Naive thymus-derived CD4-positive, alpha-beta T cell (primary cell): ENCODE measurements at regions of chr17 and their contacts with region 1.

Region 1: DNA sequence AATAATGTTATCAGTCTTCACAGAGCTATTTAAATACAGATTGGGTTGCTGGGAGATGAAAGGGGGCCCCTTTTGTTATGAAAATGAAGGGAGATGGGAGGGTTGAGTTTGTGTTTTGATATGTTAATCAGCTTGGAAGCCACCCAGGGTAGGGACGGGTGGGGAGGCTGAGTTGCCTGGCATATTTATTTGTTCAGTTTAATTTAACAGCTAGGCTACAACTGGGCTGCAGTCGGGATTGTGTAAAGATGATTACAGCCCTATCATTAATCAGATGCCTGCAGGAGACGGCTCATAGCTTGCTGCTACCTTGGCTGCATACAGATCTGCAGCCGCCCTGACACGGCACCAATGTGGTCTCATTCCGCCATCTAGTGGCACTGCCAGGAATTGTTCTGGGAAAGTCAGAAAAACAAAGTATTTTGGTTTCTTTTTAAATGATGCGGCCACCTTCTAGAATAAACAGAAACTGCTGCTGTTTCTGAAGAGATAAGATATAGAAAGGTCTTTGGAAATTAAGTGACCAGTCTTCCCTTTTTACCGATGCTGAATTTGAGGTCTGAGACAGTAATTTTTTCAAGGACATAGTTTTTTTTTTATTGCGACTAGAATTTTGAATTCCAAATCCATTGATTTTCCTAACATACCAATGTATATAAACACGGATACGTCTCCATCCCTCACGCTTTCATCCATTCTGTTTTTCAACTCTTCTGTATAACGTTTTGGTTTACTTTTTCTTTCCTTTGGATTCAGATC is 458.0 kb upstream of the ASIC2 start:
- DNase-seq: peak; percentile 21 to 65 (median 50)
- ATAC-seq: peak; percentile 75
- H3K4me3 ChIP-seq: no peak overlapping the region
- H3K4me3 Mint-ChIP-seq: peak overlapping the region in 8 of 10 donors; percentile 13 to 72 (median 48)
- H3K27ac ChIP-seq: no peak overlapping the region
- H3K27ac Mint-ChIP-seq: no peak overlapping the region
- H3K4me1 ChIP-seq: no peaks in the 10 kb centered on the region
- H3K4me1 Mint-ChIP-seq: peaks cover 0 to 9% (median 6%) of the 10 kb centered on the region in 7 donors
- H3K27me3 ChIP-seq: peaks cover 0 to 3% of the 10 kb centered on the region in 2 donors
- H3K27me3 Mint-ChIP-seq: peaks cover 16 to 71% (median 42%) of the 10 kb centered on the region in 5 donors

Region 2: GRCh38 chr17:33459078-33459940 is 291.8 kb before region 1 on chr17:
- CTCF ChIA-PET with region 1: no interaction called
- POLR2A ChIA-PET with region 1: no interaction called
- intact Hi-C with region 1: no loop called
- DNase-seq: no peak
- ATAC-seq: no peak
- H3K4me3 ChIP-seq: no peak overlapping the region
- H3K4me3 Mint-ChIP-seq: no peak overlapping the region
- H3K27ac ChIP-seq: no peak overlapping the region
- H3K27ac Mint-ChIP-seq: no peak overlapping the region
- H3K4me1 ChIP-seq: no peaks in the 10 kb centered on the region
- H3K4me1 Mint-ChIP-seq: no peaks in the 10 kb centered on the region
- H3K27me3 ChIP-seq: no peaks in the 10 kb centered on the region
- H3K27me3 Mint-ChIP-seq: peaks cover 3 to 51% (median 22%) of the 10 kb centered on the region in 5 donors

Region 3: GRCh38 chr17:33511670-33512069 is 239.5 kb before region 1 on chr17:
- CTCF ChIA-PET with region 1: no interaction called
- POLR2A ChIA-PET with region 1: no interaction called
- intact Hi-C with region 1: loop called in 1 of 2 experiments (anchors 10 kb)
- DNase-seq: no peak
- ATAC-seq: no peak
- H3K4me3 ChIP-seq: no peak overlapping the region
- H3K4me3 Mint-ChIP-seq: peak overlapping the region in 1 of 10 donors; percentile 24
- H3K27ac ChIP-seq: no peak overlapping the region
- H3K27ac Mint-ChIP-seq: no peak overlapping the region
- H3K4me1 ChIP-seq: peaks cover 0 to 8% of the 10 kb centered on the region in 2 donors
- H3K4me1 Mint-ChIP-seq: peaks cover 5 to 16% (median 6%) of the 10 kb centered on the region in 7 donors
- H3K27me3 ChIP-seq: no peaks in the 10 kb centered on the region
- H3K27me3 Mint-ChIP-seq: peaks cover 8 to 32% (median 10%) of the 10 kb centered on the region in 5 donors

Region 4: GRCh38 chr17:33520426-33521330 is 230.4 kb before region 1 on chr17:
- CTCF ChIA-PET with region 1: no interaction called
- POLR2A ChIA-PET with region 1: no interaction called
- intact Hi-C with region 1: loop called (anchors 10 kb)
- DNase-seq: peak in 4 of 9 donors; percentile 14 to 38 (median 20)
- ATAC-seq: peak; percentile 22
- H3K4me3 ChIP-seq: no peak overlapping the region
- H3K4me3 Mint-ChIP-seq: no peak overlapping the region
- H3K27ac ChIP-seq: no peak overlapping the region
- H3K27ac Mint-ChIP-seq: no peak overlapping the region
- H3K4me1 ChIP-seq: no peaks in the 10 kb centered on the region
- H3K4me1 Mint-ChIP-seq: peaks cover 0 to 2% (median 0%) of the 10 kb centered on the region in 7 donors
- H3K27me3 ChIP-seq: no peaks in the 10 kb centered on the region
- H3K27me3 Mint-ChIP-seq: peaks cover 0 to 12% (median 4%) of the 10 kb centered on the region in 5 donors

Region 5: DNA sequence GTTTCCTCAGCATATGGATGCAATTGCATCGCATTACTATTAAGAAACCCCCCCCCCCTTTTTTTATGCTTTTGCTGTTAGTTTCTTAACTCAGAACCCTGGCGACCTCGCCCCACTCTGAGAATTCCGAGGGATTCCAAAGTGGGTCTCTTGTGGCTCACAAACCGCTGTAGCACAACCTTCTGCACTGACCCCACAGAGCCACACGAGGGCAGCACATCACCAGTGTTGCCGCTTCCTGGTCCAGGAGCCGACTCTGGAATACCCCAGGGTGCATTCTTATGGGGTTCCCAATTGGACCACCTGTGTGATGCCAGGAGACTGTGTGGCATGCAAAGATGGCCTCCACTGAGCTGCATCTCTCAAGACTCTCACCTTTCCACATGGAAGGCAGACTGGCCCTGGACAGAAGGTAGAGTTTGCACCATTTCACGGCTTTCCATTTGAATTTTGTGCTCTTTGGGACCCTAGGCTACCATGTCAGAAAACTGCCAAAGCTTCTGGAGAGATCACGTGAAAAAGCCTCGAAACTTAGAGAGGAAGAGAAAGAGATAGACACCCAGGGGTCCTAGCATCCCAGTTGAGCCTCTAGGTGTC is 25.3 kb before region 1 on chr17:
- CTCF ChIA-PET with region 1: no interaction called
- POLR2A ChIA-PET with region 1: no interaction called
- intact Hi-C with region 1: loop called in 1 of 2 experiments (anchors 1 kb)
- DNase-seq: peak in 1 of 9 donors; percentile 26
- ATAC-seq: peak; percentile 42
- H3K4me3 ChIP-seq: no peak overlapping the region
- H3K4me3 Mint-ChIP-seq: no peak overlapping the region
- H3K27ac ChIP-seq: no peak overlapping the region
- H3K27ac Mint-ChIP-seq: no peak overlapping the region
- H3K4me1 ChIP-seq: no peaks in the 10 kb centered on the region
- H3K4me1 Mint-ChIP-seq: no peaks in the 10 kb centered on the region
- H3K27me3 ChIP-seq: no peaks in the 10 kb centered on the region
- H3K27me3 Mint-ChIP-seq: peaks cover 4 to 51% (median 24%) of the 10 kb centered on the region in 5 donors